CD8-positive, alpha-beta T cell (primary cell): ENCODE measurements at regions of chr4 and their contacts with region 1.

Region 1: GRCh38 chr4:184745831-184746795 is 12.2 kb upstream of the CENPU start:
- DNase-seq: peak; percentile 31 to 81 (median 74)
- ATAC-seq: peak; percentile 97
- H3K4me3 ChIP-seq: no peak overlapping the region
- H3K4me3 Mint-ChIP-seq: peak overlapping the region; percentile 53
- H3K27ac ChIP-seq: no peak overlapping the region
- H3K27ac Mint-ChIP-seq: peak overlapping the region; percentile 78
- H3K4me1 ChIP-seq: peaks cover 8% of the 10 kb centered on the region
- H3K4me1 Mint-ChIP-seq: peaks cover 16% of the 10 kb centered on the region
- H3K27me3 ChIP-seq: no peaks in the 10 kb centered on the region
- H3K27me3 Mint-ChIP-seq: peaks cover 3% of the 10 kb centered on the region
- CTCF ChIP-seq: peak; percentile 68

Region 2: DNA sequence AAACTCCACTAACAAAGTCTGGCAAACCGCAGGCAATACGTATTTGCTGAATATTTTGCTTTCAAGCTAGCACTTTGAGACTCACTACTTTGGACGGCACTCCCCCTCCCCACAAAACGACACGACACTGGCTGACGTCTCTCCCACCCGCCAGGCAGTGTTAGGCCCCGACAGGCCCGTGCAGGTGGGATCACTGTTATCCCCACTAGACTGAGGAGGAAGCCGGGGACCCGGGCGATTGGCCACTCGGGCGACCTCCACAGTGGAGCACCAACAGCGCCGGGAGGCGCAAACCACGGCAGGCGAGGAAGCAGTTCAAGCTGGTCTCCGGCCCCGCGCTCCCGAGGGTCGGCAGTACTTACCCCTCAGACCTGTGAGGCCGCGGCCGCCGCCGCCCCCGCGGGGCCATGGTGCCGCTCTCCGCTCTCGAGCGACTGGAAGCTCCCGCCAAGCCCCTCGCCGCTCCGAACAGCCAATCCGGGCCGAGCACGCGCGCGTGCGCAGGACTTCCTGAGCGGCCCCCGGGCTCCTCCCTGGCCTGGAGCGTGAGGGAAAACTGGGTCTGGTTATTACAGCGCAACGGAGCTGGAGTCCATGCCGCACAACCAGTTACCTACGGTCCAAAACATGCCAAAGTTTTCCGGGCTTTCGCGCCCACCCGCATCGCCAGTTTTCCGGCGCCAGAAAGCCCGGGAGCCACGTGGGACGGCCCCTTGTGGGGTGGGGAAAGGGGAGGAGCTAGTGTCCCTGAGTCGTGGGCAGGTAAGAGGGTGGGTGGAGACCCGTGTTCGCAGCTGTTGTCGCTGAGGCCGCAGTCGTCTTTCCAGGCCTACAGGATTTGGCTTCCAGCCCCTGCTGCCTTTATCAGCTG is 12.2 kb before region 1 on chr4 and contains the start of gene CENPU:
- CTCF ChIA-PET with region 1: interaction called, 6 read pairs
- POLR2A ChIA-PET with region 1: interaction called, 3 read pairs
- intact Hi-C with region 1: loop called in 1 of 2 experiments (anchors 1 kb)
- DNase-seq: peak; percentile 87 to 97 (median 94)
- ATAC-seq: peak; percentile 95
- H3K4me3 ChIP-seq: peak within 1 kb of the TSS; percentile 74 to 79
- H3K4me3 Mint-ChIP-seq: peak within 1 kb of the TSS; percentile 87
- H3K27ac ChIP-seq: peak within 1 kb of the TSS; percentile 2 to 43
- H3K27ac Mint-ChIP-seq: peak within 1 kb of the TSS; percentile 84
- H3K4me1 ChIP-seq: peaks cover 8% of the 10 kb centered on the region
- H3K4me1 Mint-ChIP-seq: peaks cover 18% of the 10 kb centered on the region
- H3K27me3 ChIP-seq: no peaks in the 10 kb centered on the region
- H3K27me3 Mint-ChIP-seq: no peaks in the 10 kb centered on the region
- CTCF ChIP-seq: no peak
- total RNA-seq, gene CENPU: 3.4 TPM

Region 3: DNA sequence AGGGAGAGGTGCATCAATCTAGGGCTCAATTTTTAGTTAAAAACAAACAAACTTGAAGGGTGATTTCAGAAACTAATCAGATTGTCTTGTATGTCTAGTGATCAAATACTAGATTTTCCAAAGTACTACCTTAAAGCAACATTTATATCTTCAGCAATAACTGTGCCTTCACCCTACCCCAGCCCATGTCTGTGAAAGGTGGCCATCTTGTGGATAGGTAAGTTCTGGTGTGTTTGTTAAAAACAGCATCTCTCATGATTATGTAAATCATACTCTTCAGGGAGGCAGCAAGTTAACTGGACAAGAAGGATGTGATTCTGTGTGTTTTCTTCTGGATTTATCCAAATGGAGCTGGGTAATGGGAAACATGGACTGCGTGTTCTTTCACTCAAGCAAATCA is 161.1 kb after region 1 on chr4:
- CTCF ChIA-PET with region 1: interaction called, 3 read pairs
- POLR2A ChIA-PET with region 1: no interaction called
- intact Hi-C with region 1: loop called (anchors 1 to 5 kb)
- DNase-seq: peak in 2 of 9 experiments; percentile 9 to 20
- ATAC-seq: no peak
- H3K4me3 ChIP-seq: no peak overlapping the region
- H3K4me3 Mint-ChIP-seq: no peak overlapping the region
- H3K27ac ChIP-seq: no peak overlapping the region
- H3K27ac Mint-ChIP-seq: no peak overlapping the region
- H3K4me1 ChIP-seq: peaks cover 3% of the 10 kb centered on the region
- H3K4me1 Mint-ChIP-seq: peaks cover 2% of the 10 kb centered on the region
- H3K27me3 ChIP-seq: no peaks in the 10 kb centered on the region
- H3K27me3 Mint-ChIP-seq: no peaks in the 10 kb centered on the region
- CTCF ChIP-seq: no peak

Region 4: DNA sequence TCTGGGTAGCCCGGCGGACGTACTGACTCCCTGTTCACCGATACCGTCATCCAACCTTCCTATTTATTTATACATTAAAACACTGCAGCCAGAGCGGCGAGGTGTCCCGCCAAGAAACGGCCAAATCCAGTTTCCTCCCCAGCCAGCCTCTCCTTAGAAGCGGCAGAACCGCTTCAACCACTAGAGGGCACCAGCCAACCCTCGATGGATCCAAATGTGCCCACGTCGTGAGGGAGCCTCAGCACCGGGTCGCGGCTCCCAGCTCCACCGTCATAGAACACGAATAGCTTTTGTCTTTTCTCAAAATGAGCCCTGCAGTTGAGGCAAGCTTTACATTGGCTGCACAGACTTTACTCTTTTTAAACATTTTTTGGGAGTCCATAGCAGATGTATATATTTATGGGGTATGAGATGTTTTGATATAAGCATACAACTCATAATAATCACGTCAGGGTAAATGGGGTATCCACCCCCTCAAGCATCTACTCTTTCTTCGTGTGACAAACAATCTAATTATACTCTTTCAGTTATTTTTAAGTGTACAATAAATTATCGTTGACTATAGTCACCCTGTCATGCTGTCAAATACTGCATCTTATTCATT is 259.2 kb after region 1 on chr4:
- CTCF ChIA-PET with region 1: interaction called, 3 read pairs
- POLR2A ChIA-PET with region 1: no interaction called
- intact Hi-C with region 1: loop called (anchors 1 to 5 kb)
- DNase-seq: peak; percentile 50 to 82 (median 76)
- ATAC-seq: peak; percentile 96
- H3K4me3 ChIP-seq: no peak overlapping the region
- H3K4me3 Mint-ChIP-seq: peak overlapping the region; percentile 50
- H3K27ac ChIP-seq: no peak overlapping the region
- H3K27ac Mint-ChIP-seq: no peak overlapping the region
- H3K4me1 ChIP-seq: no peaks in the 10 kb centered on the region
- H3K4me1 Mint-ChIP-seq: peaks cover 4% of the 10 kb centered on the region
- H3K27me3 ChIP-seq: peaks cover 2 to 6% of the 10 kb centered on the region in 2 experiments
- H3K27me3 Mint-ChIP-seq: peaks cover 51% of the 10 kb centered on the region
- CTCF ChIP-seq: peak; percentile 88

Region 5: GRCh38 chr4:185096032-185096653 is 350.0 kb after region 1 on chr4:
- CTCF ChIA-PET with region 1: interaction called, 6 read pairs
- POLR2A ChIA-PET with region 1: no interaction called
- intact Hi-C with region 1: loop called in 1 of 2 experiments (anchors 1 kb)
- DNase-seq: peak in 5 of 9 experiments; percentile 20 to 48 (median 24)
- ATAC-seq: no peak
- H3K4me3 ChIP-seq: no peak overlapping the region
- H3K4me3 Mint-ChIP-seq: no peak overlapping the region
- H3K27ac ChIP-seq: no peak overlapping the region
- H3K27ac Mint-ChIP-seq: no peak overlapping the region
- H3K4me1 ChIP-seq: no peaks in the 10 kb centered on the region
- H3K4me1 Mint-ChIP-seq: no peaks in the 10 kb centered on the region
- H3K27me3 ChIP-seq: peaks cover 0 to 2% of the 10 kb centered on the region in 2 experiments
- H3K27me3 Mint-ChIP-seq: peaks cover 17% of the 10 kb centered on the region
- CTCF ChIP-seq: peak; percentile 59

Region 6: DNA sequence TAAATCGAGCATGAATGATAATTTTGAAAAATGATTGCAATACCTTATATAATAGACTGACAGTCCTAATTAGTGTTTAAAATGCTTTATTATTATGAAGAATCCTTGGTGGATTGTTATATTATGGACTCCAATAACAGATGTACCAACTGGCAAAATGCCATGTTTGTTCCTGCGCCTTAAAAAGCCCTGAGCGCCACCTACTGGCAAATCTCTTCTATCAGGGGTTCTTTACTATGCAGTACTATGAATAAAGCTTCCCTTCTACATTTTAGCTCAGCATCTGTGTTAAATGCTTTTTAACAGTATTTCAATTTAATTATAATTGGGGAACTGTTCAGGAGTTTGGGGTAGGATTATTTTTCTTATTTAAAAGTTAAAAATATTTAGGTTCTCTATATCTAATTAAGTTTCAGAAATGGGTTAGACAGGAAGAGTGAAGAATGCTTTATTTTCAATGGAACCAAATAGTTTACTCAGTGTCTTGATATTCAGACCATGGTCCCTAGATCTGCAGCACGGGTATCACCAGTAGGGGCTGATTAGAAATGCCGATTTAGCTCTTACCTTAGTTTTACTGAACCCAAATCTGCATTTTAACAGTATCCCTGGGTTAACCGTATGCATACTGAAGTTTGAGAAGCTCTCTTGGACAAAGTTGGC is 437.6 kb after region 1 on chr4:
- CTCF ChIA-PET with region 1: no interaction called
- POLR2A ChIA-PET with region 1: no interaction called
- intact Hi-C with region 1: loop called in 1 of 2 experiments (anchors 5 kb)
- DNase-seq: peak; percentile 40 to 90 (median 78)
- ATAC-seq: peak; percentile 75
- H3K4me3 ChIP-seq: no peak overlapping the region
- H3K4me3 Mint-ChIP-seq: no peak overlapping the region
- H3K27ac ChIP-seq: no peak overlapping the region
- H3K27ac Mint-ChIP-seq: no peak overlapping the region
- H3K4me1 ChIP-seq: peaks cover 4% of the 10 kb centered on the region
- H3K4me1 Mint-ChIP-seq: peaks cover 36% of the 10 kb centered on the region
- H3K27me3 ChIP-seq: no peaks in the 10 kb centered on the region
- H3K27me3 Mint-ChIP-seq: no peaks in the 10 kb centered on the region
- CTCF ChIP-seq: peak; percentile 95